Naive thymus-derived CD4-positive, alpha-beta T cell (primary cell): ENCODE measurements at regions of chrX and their contacts with region 1.

Region 1: DNA sequence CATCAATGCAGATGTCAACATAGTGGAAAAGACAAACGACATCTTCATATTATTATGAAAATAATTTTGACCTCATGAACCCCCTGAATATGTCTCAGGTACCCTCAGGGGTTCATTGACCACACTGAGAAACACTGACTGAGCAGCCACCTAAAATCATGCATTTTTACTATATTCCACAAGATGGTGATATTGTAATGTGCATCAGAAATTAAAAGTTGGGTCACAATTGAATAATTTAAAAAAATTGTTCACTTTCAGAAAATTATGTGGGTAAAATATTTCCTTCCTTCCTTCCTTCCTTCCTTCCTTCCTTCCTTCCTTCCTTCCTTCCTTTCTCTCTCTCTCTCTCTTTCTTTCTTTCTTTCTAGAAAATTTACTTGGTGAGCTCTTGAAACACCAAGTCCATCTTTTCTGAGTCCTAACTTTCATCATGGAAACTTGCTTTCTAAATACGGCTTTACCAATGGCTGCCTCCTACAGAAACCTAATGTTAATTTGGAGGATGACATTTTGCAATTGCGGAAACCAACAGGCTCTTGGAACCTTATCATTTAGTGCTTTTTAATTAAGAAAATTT is 103.6 kb downstream of the RTL3 start:
- DNase-seq: peak in 5 of 9 donors; percentile 25 to 44 (median 29)
- ATAC-seq: peak; percentile 59
- H3K4me3 ChIP-seq: no peak overlapping the region
- H3K4me3 Mint-ChIP-seq: peak overlapping the region in 1 of 10 donors; percentile 30
- H3K27ac ChIP-seq: no peak overlapping the region
- H3K27ac Mint-ChIP-seq: peak overlapping the region in 6 of 9 donors; percentile 66 to 83 (median 73)
- H3K4me1 ChIP-seq: peaks cover 0 to 2% of the 10 kb centered on the region in 2 donors
- H3K4me1 Mint-ChIP-seq: peaks cover 0 to 7% (median 3%) of the 10 kb centered on the region in 7 donors
- H3K27me3 ChIP-seq: no peaks in the 10 kb centered on the region
- H3K27me3 Mint-ChIP-seq: no peaks in the 10 kb centered on the region

Region 2: DNA sequence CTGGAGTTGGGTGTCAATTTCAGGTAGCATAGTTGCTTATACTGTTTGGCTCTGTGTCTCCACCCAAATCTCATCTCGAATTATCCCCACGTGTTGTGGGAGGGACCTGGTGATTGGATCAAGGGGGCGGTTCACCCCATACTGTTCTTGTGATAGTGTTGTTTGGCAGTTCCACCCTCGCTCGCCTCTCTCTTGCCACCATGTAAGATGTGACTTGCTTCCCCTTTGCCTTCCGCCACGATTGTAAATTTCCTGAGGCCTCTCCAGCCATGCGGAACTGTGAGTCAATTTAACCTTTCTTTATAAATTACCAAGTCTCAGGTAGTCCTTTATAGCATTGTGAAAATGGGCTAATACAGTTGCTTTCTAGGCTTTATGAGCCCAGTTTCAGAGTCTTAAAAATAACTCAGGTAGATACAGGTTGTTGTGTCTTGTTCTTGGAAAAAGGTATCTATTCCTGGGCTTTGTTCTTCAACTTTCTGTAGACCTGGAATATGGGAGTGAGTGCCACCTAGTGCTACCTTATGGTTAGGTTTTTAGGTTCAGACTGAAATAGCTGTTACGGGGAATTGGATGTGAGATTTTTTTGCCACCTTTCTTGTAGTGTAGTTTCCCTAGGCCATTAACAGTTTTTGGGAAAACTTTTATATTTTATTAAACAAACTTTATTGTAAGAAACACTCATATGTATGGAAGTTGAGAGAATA is 435.8 kb before region 1 on chrX:
- CTCF ChIA-PET with region 1: no interaction called
- POLR2A ChIA-PET with region 1: no interaction called
- intact Hi-C with region 1: loop called in 1 of 2 experiments (anchors 1 kb)
- DNase-seq: no peak
- ATAC-seq: peak; percentile 45
- H3K4me3 ChIP-seq: no peak overlapping the region
- H3K4me3 Mint-ChIP-seq: peak overlapping the region in 1 of 10 donors; percentile 12
- H3K27ac ChIP-seq: peak overlapping the region; percentile 27
- H3K27ac Mint-ChIP-seq: peak overlapping the region in 6 of 9 donors; percentile 11 to 84 (median 28)
- H3K4me1 ChIP-seq: peaks cover 0 to 25% of the 10 kb centered on the region in 2 donors
- H3K4me1 Mint-ChIP-seq: peaks cover 26 to 70% (median 56%) of the 10 kb centered on the region in 7 donors
- H3K27me3 ChIP-seq: no peaks in the 10 kb centered on the region
- H3K27me3 Mint-ChIP-seq: no peaks in the 10 kb centered on the region

Region 3: DNA sequence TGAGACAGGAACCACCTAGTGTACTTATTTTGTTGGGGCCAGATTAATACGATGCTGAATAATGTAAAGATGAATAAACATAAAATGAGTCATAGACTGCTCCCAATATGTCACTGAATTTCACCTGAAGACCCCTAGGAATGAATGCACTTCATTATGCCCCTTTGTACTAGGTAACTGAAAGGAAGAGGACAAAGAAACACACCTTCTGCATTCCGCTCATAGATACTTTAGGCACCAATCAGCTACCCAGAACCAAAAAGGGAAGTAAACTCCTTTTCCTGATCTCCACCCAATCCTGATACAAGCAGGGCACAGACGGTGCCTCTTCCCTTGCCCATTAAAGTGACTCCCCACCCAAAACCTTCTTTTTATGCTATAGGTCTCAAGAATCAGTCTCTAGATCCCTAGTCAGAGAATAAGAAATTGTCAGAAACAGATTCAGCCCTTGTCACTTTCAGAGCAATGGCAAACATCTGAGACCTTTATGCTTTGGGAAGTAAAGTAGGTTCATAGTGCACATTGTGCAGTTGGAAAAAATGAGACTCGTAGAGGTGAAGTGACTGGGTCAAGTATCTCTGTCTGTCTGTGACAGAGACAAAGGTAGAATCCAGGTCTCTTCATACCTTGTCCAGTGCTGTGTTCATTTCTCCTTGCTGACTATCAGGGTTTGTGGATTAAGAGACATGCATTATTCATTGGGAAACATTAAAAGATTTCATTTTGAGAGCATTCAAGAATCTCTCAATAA is 591.3 kb after region 1 on chrX:
- CTCF ChIA-PET with region 1: interaction called, 4 read pairs
- POLR2A ChIA-PET with region 1: no interaction called
- intact Hi-C with region 1: loop called (anchors 10 kb)
- DNase-seq: no peak
- ATAC-seq: peak; percentile 64
- H3K4me3 ChIP-seq: peak overlapping the region; percentile 71
- H3K4me3 Mint-ChIP-seq: peak overlapping the region; percentile 66 to 96 (median 92)
- H3K27ac ChIP-seq: peak overlapping the region; percentile 85
- H3K27ac Mint-ChIP-seq: peak overlapping the region; percentile 82 to 98 (median 91)
- H3K4me1 ChIP-seq: peaks cover 10 to 16% of the 10 kb centered on the region in 2 donors
- H3K4me1 Mint-ChIP-seq: peaks cover 10 to 47% (median 28%) of the 10 kb centered on the region in 7 donors
- H3K27me3 ChIP-seq: no peaks in the 10 kb centered on the region
- H3K27me3 Mint-ChIP-seq: no peaks in the 10 kb centered on the region

Region 4: DNA sequence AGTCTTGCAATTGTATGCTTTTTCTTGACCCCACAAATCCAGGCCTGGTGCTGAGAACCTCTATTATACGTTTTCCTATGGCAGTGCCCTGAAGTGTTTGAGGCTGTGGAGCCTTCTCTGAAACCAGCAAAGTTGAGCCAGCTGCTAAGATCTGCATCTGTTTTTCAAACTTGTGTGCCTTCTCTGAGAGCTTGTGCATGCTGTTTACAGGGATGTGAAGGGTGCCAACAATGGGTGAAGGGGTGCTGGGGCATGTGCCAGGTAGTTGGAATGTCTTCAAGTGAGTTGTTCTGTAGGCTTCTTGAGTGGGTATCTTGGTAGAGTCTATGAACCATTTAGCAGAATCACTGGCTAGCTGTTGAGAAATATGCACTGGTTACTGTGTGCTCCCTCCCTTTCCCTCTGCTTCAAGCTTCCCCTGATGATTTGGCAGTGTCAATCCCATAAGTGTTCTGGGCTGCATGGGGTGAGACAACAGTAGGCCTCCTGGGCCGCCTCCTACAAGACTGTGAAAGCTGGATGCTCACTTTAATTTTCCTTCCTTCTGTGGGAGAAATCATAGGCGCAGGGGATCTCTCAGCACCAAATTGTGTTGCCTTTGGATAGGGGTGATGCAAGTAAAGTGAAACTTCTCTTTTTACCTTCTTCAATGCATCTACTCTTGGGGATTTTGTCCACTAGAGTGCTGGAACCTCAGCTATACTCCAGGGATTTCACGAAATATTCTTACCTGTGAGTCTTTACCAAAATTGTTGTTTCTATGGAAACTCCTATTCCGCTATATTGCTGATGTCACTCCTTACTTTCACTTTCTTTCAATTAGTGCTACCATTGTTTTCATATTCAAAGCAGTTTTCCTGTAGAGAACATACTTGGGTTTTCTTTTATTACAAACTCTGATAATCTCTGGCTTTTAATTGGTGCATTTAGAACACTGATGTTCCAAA is 781.7 kb after region 1 on chrX:
- CTCF ChIA-PET with region 1: no interaction called
- POLR2A ChIA-PET with region 1: no interaction called
- intact Hi-C with region 1: loop called in 1 of 2 experiments (anchors 2 kb)
- DNase-seq: peak in 7 of 9 donors; percentile 14 to 58 (median 34)
- ATAC-seq: peak; percentile 71
- H3K4me3 ChIP-seq: peak overlapping the region; percentile 51
- H3K4me3 Mint-ChIP-seq: peak overlapping the region; percentile 56 to 89 (median 84)
- H3K27ac ChIP-seq: peak overlapping the region; percentile 72
- H3K27ac Mint-ChIP-seq: peak overlapping the region; percentile 85 to 97 (median 91)
- H3K4me1 ChIP-seq: peaks cover 0 to 4% of the 10 kb centered on the region in 2 donors
- H3K4me1 Mint-ChIP-seq: peaks cover 2 to 36% (median 23%) of the 10 kb centered on the region in 7 donors
- H3K27me3 ChIP-seq: no peaks in the 10 kb centered on the region
- H3K27me3 Mint-ChIP-seq: no peaks in the 10 kb centered on the region

Region 5: DNA sequence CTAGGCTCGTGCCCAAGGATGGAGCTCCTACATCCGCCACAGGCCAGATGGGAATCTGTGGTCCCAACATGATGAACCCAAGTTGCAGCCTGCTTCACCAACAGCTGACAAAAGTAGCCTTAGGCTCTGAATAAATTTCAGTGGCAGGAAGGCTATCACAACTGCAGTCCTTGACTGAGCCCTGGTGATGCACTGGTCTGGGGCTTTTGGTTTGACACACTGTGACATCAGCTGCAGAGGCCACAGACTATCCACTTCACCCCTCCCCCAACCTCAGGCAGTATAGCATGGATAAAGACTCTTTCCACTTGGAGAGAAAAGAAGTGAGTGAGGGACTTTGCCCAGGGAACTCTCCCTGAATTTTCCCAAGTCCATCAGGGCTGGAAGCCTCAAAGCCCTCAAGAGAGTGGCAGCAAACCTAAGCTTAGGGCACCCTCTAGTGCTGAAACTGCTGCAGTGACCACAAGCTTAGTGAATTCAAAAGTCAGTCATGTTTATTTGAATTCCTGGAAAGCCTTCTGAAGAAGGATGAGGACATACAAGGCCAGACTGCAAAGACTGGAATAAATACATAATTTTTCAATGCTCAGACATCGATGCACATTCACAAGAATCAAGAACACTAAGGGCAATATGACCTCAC is 1729.8 kb after region 1 on chrX:
- CTCF ChIA-PET with region 1: no interaction called
- POLR2A ChIA-PET with region 1: no interaction called
- intact Hi-C with region 1: loop called in 1 of 2 experiments (anchors 10 kb)
- DNase-seq: peak in 1 of 9 donors; percentile 0
- ATAC-seq: no peak
- H3K4me3 ChIP-seq: no peak overlapping the region
- H3K4me3 Mint-ChIP-seq: no peak overlapping the region
- H3K27ac ChIP-seq: no peak overlapping the region
- H3K27ac Mint-ChIP-seq: no peak overlapping the region
- H3K4me1 ChIP-seq: no peaks in the 10 kb centered on the region
- H3K4me1 Mint-ChIP-seq: no peaks in the 10 kb centered on the region
- H3K27me3 ChIP-seq: no peaks in the 10 kb centered on the region
- H3K27me3 Mint-ChIP-seq: no peaks in the 10 kb centered on the region